Caco-2 (cell line): ENCODE measurements at regions of chr12 and their contacts with region 1.

Region 1: GRCh38 chr12:12546314-12546772 is 16.3 kb downstream of the DUSP16 start:
- DNase-seq: no peak
- H3K4me3 ChIP-seq: no peak overlapping the region
- H3K4me3 Mint-ChIP-seq: no peak overlapping the region
- H3K27ac Mint-ChIP-seq: no peak overlapping the region
- H3K4me1 ChIP-seq: peaks cover 20% of the 10 kb centered on the region
- H3K4me1 Mint-ChIP-seq: peaks cover 11% of the 10 kb centered on the region
- H3K27me3 ChIP-seq: no peaks in the 10 kb centered on the region
- H3K27me3 Mint-ChIP-seq: no peaks in the 10 kb centered on the region
- CTCF ChIP-seq: no peak

Region 2: DNA sequence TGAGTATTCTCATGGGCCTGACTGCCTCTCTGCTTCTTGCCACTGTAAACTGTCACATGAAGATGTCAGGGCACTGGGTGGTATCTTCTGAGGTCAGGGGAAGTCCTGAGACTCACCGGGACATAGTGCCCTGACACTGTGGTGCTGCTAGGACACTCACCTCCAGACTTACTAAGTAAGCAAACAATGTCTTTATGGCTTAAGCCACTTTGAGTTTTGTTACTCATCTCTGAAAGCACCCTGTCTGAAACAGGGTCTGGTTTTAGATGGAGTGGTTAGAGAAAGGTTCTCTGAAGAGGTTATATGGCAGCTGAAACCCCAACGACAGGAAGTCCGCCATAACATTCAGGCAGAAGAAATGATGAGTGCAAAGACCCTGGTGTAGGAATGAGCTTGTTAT is 127.0 kb after region 1 on chr12:
- CTCF ChIA-PET with region 1: no interaction called
- POLR2A ChIA-PET with region 1: interaction called, 12 read pairs
- intact Hi-C with region 1: no loop called
- DNase-seq: no peak
- H3K4me3 ChIP-seq: no peak overlapping the region
- H3K4me3 Mint-ChIP-seq: no peak overlapping the region
- H3K27ac Mint-ChIP-seq: no peak overlapping the region
- H3K4me1 ChIP-seq: no peaks in the 10 kb centered on the region; the same call in 1 of the 2 replicates
- H3K4me1 Mint-ChIP-seq: peaks cover 5% of the 10 kb centered on the region
- H3K27me3 ChIP-seq: no peaks in the 10 kb centered on the region
- H3K27me3 Mint-ChIP-seq: no peaks in the 10 kb centered on the region
- CTCF ChIP-seq: no peak